ENCODE measurements at regions of chr10 and their contacts with region 1.

Region 1: DNA sequence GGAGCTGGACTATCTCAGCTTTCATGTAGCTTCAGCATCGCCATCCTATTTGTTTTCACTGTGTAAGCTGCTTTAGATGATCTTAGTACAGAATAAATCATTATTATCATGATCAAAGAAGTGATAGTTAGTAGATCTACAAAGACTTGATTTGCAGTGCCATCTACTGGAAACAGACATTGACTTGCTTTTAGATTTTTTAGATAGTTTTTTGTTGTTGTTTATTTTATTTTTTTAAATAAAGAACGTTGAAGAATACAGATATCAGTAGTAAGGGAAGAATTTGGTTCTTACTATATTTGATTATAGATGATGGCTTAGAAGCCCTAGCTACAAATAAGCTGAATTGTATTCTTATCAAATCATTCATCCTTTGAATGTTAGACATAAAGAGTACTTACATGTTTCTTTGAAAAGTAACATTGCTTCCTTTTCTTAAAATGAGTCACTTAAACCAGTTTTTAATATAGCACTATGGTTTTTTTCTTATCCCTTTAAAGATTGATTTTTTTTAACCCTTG is 6.3 kb upstream of the SFMBT2 start:
- DNase-seq: no peak
- H3K4me3 ChIP-seq: no peak overlapping the region
- H3K27ac ChIP-seq: no peak overlapping the region
- H3K4me1 ChIP-seq: peaks cover 7 to 25% (median 16%) of the 10 kb centered on the region in 6 donors
- H3K27me3 ChIP-seq: peaks cover 0 to 18% (median 10%) of the 10 kb centered on the region in 7 donors
- CTCF ChIP-seq: peak in 9 of 11 experiments; percentile 34 to 69 (median 51)
- POLR2A ChIP-seq: no peak

Region 2: GRCh38 chr10:6918305-6918704 is 498.9 kb before region 1 on chr10:
- intact Hi-C with region 1: loop called (anchors 2 kb)
- DNase-seq: peak; percentile 82
- H3K4me3 ChIP-seq: no peak overlapping the region
- H3K27ac ChIP-seq: no peak overlapping the region
- H3K4me1 ChIP-seq: peaks cover 0 to 43% (median 17%) of the 10 kb centered on the region in 6 donors
- H3K27me3 ChIP-seq: no peaks in the 10 kb centered on the region
- CTCF ChIP-seq: peak; percentile 25 to 70 (median 55)
- POLR2A ChIP-seq: no peak

Region 3: DNA sequence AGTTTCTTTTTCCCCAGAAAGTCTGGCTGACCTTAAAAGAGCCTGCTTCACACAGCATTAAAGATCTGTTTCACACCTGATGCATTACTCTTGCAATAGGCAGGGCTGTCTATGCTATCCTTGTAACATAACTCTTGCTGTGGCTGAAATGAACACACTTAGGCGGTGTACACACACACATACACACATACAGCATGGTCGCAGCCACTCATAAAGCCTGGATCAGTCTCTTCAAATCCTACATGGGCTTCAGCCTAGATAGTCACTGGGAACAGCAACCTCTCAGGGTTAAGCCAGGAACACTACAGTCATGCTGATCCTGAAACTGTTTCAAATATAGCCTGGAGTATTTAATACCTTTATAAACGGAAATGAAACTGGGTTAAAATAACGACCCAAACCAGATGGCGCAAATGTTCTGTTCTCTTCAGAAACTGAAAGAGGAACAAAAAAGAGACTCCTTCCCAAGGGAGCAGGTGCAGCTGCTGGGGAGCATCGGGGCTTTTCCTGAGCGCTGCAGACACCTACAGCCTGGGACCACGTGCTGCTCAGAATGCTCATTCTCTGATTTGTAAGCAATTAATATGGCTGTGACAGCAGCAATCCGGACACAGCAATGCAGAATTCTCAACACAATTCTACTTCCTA is 54.7 kb after region 1 on chr10:
- intact Hi-C with region 1: no loop called
- DNase-seq: peak; percentile 86
- H3K4me3 ChIP-seq: peak overlapping the region in 4 of 8 donors; percentile 7 to 47 (median 12)
- H3K27ac ChIP-seq: peak overlapping the region; percentile 29 to 80 (median 60)
- H3K4me1 ChIP-seq: peaks cover 25 to 75% (median 57%) of the 10 kb centered on the region in 6 donors
- H3K27me3 ChIP-seq: no peaks in the 10 kb centered on the region
- CTCF ChIP-seq: no peak
- POLR2A ChIP-seq: no peak

Region 4: GRCh38 chr10:7507887-7508726 is 90.9 kb after region 1 on chr10:
- intact Hi-C with region 1: no loop called
- DNase-seq: peak; percentile 82
- H3K4me3 ChIP-seq: no peak overlapping the region
- H3K27ac ChIP-seq: peak overlapping the region in 6 of 8 donors; percentile 16 to 75 (median 70)
- H3K4me1 ChIP-seq: peaks cover 0 to 32% (median 9%) of the 10 kb centered on the region in 6 donors
- H3K27me3 ChIP-seq: no peaks in the 10 kb centered on the region
- CTCF ChIP-seq: no peak
- POLR2A ChIP-seq: no peak

Region 5: DNA sequence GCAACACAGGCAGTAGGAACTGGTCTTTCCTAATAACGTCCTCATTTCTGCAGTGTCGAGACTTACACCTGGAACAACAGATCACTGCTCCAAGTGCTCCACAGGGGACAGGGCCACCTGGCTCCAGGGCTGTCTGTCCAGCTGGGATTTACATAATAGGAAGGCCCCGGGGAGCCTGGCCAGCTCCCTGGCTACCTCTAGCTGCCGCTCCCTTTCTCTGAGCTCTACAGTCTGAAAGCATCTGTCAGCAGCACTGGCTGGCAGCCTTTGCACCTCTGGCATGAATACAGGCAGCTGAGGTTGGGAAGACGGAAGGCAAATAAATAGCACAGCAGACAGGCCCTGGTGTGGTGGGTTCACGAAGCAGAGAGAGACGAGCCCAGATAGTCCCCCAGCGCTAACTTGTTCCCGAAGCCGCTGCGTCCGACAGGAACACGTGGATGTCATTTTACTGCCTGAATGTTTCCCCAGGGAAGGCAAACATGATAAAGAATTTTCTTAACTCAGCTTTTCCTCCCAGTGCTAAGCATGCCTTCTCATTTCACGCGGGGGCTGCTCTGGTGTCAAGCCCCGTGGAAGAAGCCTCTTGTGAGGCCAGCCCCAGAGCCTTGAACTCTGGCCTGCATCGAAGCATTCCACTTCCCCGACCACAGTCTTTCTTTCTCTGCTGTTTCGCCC is 144.2 kb after region 1 on chr10:
- intact Hi-C with region 1: no loop called
- DNase-seq: no peak
- H3K4me3 ChIP-seq: no peak overlapping the region
- H3K27ac ChIP-seq: peak overlapping the region in 2 of 8 donors; percentile 7 to 18
- H3K4me1 ChIP-seq: peaks cover 5 to 39% (median 24%) of the 10 kb centered on the region in 6 donors
- H3K27me3 ChIP-seq: peaks cover 0 to 4% (median 0%) of the 10 kb centered on the region in 7 donors
- CTCF ChIP-seq: no peak
- POLR2A ChIP-seq: no peak

Measured in spleen (tissue), 13 donors.